Lower leg skin (tissue), 4 donors: ENCODE measurements at regions of chr7 and their contacts with region 1.

Region 1: DNA sequence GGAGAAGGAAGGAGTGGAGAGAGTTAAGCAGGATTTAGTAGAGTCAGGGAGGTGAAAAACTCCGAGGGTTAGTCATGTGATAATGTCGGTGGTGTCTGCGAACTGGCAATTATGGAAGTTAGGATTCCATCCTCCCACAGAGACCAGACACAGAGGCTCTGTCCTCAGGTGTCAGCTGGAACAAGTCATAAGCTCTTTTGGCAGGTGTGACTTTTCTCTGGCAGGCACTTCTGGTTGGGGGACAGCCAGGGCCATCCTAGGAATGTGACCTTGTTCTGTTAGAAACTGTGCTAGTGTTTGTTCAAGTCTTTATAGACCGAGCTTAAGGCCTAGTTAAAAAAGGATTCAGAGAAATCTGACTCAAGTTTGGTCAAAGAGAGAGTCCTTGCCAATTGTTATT is 371.0 kb downstream of the DPP6 start:
- DNase-seq: no peak
- H3K4me3 ChIP-seq: no peak overlapping the region
- CTCF ChIP-seq: no peak
- POLR2A ChIP-seq: no peak

Region 2: DNA sequence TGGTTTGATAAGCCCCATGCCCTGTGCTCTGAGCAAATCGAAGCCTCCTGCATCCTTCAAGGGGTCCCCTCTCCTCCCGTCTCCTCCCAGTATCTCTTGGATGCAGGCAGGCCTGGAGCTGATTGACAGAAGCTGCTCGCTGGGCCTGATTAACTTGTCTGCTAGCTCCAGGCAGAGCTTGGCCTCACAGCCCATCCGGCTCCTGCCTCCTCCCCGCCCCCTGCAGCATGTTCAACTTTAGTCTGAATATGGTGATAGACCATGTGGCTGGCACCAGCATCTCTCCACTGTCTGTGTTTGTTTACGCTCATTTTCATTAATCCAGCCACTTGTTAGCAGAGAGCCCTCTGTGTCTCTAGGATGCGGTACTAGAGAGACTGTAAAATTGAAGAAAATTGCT is 61.2 kb after region 1 on chr7:
- intact Hi-C with region 1: loop called (anchors 10 kb)
- DNase-seq: no peak
- H3K4me3 ChIP-seq: no peak overlapping the region
- CTCF ChIP-seq: no peak
- POLR2A ChIP-seq: no peak

Region 3: GRCh38 chr7:155380221-155380861 is 957.1 kb after region 1 on chr7:
- intact Hi-C with region 1: no loop called
- DNase-seq: peak; percentile 66 to 92
- H3K4me3 ChIP-seq: no peak overlapping the region
- CTCF ChIP-seq: peak in 1 of 3 donors; percentile 20
- POLR2A ChIP-seq: no peak